ENCODE measurements at regions of chr12 and their contacts with region 1.

Region 1: GRCh38 chr12:54053751-54054741 is at the start of gene HOXC4:
- DNase-seq: no peak
- H3K4me3 ChIP-seq: peak within 1 kb of the TSS; percentile 43
- CTCF ChIP-seq: no peak

Region 2: GRCh38 chr12:53659011-53659551 is 395.0 kb before region 1 on chr12:
- CTCF ChIA-PET with region 1: no interaction called
- POLR2A ChIA-PET with region 1: no interaction called
- DNase-seq: no peak
- H3K4me3 ChIP-seq: no peak overlapping the region
- CTCF ChIP-seq: no peak

Region 3: DNA sequence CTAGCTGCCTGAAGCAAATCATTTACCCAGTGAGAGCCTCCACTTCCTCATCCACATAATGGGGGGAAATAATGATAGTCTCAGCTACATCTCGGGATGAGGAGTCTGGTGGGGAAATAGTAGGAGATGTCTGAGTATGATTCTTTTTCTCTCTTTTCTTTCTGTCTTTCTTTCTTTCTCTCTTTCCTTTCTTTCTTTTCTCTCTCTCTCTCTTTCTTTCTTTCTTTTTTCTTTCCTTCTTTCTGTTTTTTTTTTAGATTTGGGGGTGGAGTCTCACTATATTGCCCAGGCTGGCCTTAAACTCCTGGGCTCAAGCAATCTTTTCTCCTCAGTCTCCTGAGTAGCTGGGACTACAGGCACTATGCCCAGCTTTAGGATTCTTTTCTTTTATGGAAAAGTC is 12.4 kb after region 1 on chr12:
- CTCF ChIA-PET with region 1: interaction called, 12 read pairs
- POLR2A ChIA-PET with region 1: no interaction called
- DNase-seq: no peak
- H3K4me3 ChIP-seq: no peak overlapping the region
- CTCF ChIP-seq: no peak

Region 4: DNA sequence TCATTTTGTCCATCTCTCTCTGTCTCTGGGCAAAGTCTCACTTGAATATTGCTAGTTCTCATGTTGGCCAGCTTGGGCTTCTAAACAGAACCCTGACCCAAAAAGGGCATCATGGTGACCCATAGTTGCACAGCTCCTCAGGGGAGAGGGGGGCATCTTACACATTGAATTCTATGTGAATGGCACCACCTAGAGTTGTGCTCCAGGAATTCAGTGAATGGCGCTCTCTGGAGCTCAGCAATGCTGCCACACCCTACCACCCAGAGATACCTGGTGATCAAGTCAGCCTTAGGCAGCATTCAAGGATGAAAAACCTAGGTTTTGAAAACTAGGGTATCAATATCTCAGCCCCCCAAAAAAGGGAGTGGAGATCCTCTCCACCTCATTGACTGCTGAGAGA is 84.2 kb after region 1 on chr12:
- CTCF ChIA-PET with region 1: interaction called, 10 read pairs
- POLR2A ChIA-PET with region 1: no interaction called
- DNase-seq: no peak
- H3K4me3 ChIP-seq: no peak overlapping the region
- CTCF ChIP-seq: no peak

Region 5: GRCh38 chr12:54201001-54201794 is 147.2 kb after region 1 on chr12:
- CTCF ChIA-PET with region 1: interaction called, 12 read pairs
- POLR2A ChIA-PET with region 1: no interaction called
- DNase-seq: no peak
- H3K4me3 ChIP-seq: no peak overlapping the region
- CTCF ChIP-seq: peak; percentile 98

Measured in AG04449 (cell line).